Caco-2 (cell line): ENCODE measurements at regions of chr10 and their contacts with region 1.

Region 1: GRCh38 chr10:59176167-59177030 is at the start of gene PHYHIPL:
- DNase-seq: peak; percentile 77 to 84
- H3K4me3 ChIP-seq: peak within 1 kb of the TSS; percentile 97
- H3K4me3 Mint-ChIP-seq: peak within 1 kb of the TSS; percentile 90
- H3K27ac Mint-ChIP-seq: peak within 1 kb of the TSS; percentile 60
- H3K4me1 ChIP-seq: peaks cover 39% of the 10 kb centered on the region
- H3K4me1 Mint-ChIP-seq: peaks cover 25% of the 10 kb centered on the region
- H3K27me3 ChIP-seq: no peaks in the 10 kb centered on the region
- H3K27me3 Mint-ChIP-seq: no peaks in the 10 kb centered on the region
- CTCF ChIP-seq: no peak
- total RNA-seq, gene PHYHIPL: 48.1 and 50.2 TPM in 2 replicates

Region 2: GRCh38 chr10:59108886-59109288 is 67.5 kb before region 1 on chr10:
- CTCF ChIA-PET with region 1: no interaction called
- POLR2A ChIA-PET with region 1: no interaction called
- intact Hi-C with region 1: loop called (anchors 1 kb)
- DNase-seq: peak in 1 of 2 experiments; percentile 66
- H3K4me3 ChIP-seq: no peak overlapping the region
- H3K4me3 Mint-ChIP-seq: peak overlapping the region; percentile 34
- H3K27ac Mint-ChIP-seq: peak overlapping the region; percentile 80
- H3K4me1 ChIP-seq: peaks cover 42% of the 10 kb centered on the region
- H3K4me1 Mint-ChIP-seq: peaks cover 41% of the 10 kb centered on the region
- H3K27me3 ChIP-seq: no peaks in the 10 kb centered on the region
- H3K27me3 Mint-ChIP-seq: no peaks in the 10 kb centered on the region
- CTCF ChIP-seq: no peak

Region 3: DNA sequence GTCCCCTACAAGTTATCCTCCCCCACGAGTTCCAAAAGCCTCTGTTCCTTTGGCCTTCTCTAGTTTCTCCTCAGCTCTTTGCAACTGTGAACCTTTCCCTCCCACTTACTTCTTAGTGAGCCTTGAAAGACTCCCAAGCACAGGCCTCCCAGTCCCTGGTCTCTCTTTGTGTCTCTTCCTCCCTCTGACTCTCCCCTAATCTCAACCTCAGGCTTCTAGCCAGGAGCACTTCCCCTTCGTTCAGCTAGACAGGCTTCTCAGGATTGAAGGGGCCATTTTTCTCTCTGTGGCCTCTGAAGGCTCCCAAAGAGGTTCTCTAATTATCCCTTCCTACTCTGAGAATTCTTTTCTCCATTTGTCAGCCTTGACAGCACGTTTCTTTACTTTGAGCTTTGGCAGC is 50.1 kb before region 1 on chr10:
- CTCF ChIA-PET with region 1: interaction called, 4 read pairs
- POLR2A ChIA-PET with region 1: no interaction called
- intact Hi-C with region 1: loop called (anchors 1 kb)
- DNase-seq: no peak
- H3K4me3 ChIP-seq: no peak overlapping the region
- H3K4me3 Mint-ChIP-seq: no peak overlapping the region
- H3K27ac Mint-ChIP-seq: peak overlapping the region; percentile 86
- H3K4me1 ChIP-seq: peaks cover 33% of the 10 kb centered on the region
- H3K4me1 Mint-ChIP-seq: peaks cover 21% of the 10 kb centered on the region
- H3K27me3 ChIP-seq: no peaks in the 10 kb centered on the region
- H3K27me3 Mint-ChIP-seq: no peaks in the 10 kb centered on the region
- CTCF ChIP-seq: no peak

Region 4: DNA sequence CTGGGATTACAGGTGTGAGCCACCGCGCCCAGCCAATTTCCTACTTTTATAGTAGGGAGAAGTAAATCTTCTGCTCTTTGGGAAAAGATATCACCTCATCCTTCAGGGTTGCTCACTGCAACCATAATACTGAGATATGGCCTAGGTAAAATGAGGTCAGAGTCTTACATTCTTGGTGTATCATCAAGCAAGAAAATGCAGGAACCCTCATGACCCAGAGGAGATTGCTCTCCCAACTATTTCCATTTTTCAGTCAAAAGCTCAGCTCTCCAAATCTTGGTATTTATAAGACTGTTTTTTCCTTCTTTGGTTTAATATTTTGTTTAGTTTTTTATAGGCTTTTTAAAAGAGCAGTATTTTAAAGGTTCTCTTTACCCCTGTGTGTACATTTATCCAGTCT is 20.8 kb before region 1 on chr10:
- CTCF ChIA-PET with region 1: no interaction called
- POLR2A ChIA-PET with region 1: no interaction called
- intact Hi-C with region 1: loop called (anchors 2 kb)
- DNase-seq: no peak
- H3K4me3 ChIP-seq: no peak overlapping the region
- H3K4me3 Mint-ChIP-seq: no peak overlapping the region
- H3K27ac Mint-ChIP-seq: no peak overlapping the region
- H3K4me1 ChIP-seq: no peaks in the 10 kb centered on the region
- H3K4me1 Mint-ChIP-seq: no peaks in the 10 kb centered on the region
- H3K27me3 ChIP-seq: no peaks in the 10 kb centered on the region
- H3K27me3 Mint-ChIP-seq: no peaks in the 10 kb centered on the region
- CTCF ChIP-seq: no peak

Region 5: GRCh38 chr10:59362144-59362958 is 186.0 kb after region 1 on chr10 and contains the start of gene FAM13C:
- CTCF ChIA-PET with region 1: no interaction called
- POLR2A ChIA-PET with region 1: no interaction called
- intact Hi-C with region 1: no loop called
- DNase-seq: peak; percentile 79 to 86
- H3K4me3 ChIP-seq: peak within 1 kb of the TSS; percentile 47
- H3K4me3 Mint-ChIP-seq: peak within 1 kb of the TSS; percentile 80
- H3K27ac Mint-ChIP-seq: no peak within 1 kb of the TSS
- H3K4me1 ChIP-seq: peaks cover 9% of the 10 kb centered on the region
- H3K4me1 Mint-ChIP-seq: peaks cover 7% of the 10 kb centered on the region
- H3K27me3 ChIP-seq: no peaks in the 10 kb centered on the region
- H3K27me3 Mint-ChIP-seq: peaks cover 15% of the 10 kb centered on the region
- CTCF ChIP-seq: peak in 1 of 2 experiments; percentile 2
- total RNA-seq, gene FAM13C: 0.18 and 0.42 TPM in 2 replicates